GM12878 (cell line): ENCODE measurements at regions of chr18 and their contacts with region 1.

Region 1: DNA sequence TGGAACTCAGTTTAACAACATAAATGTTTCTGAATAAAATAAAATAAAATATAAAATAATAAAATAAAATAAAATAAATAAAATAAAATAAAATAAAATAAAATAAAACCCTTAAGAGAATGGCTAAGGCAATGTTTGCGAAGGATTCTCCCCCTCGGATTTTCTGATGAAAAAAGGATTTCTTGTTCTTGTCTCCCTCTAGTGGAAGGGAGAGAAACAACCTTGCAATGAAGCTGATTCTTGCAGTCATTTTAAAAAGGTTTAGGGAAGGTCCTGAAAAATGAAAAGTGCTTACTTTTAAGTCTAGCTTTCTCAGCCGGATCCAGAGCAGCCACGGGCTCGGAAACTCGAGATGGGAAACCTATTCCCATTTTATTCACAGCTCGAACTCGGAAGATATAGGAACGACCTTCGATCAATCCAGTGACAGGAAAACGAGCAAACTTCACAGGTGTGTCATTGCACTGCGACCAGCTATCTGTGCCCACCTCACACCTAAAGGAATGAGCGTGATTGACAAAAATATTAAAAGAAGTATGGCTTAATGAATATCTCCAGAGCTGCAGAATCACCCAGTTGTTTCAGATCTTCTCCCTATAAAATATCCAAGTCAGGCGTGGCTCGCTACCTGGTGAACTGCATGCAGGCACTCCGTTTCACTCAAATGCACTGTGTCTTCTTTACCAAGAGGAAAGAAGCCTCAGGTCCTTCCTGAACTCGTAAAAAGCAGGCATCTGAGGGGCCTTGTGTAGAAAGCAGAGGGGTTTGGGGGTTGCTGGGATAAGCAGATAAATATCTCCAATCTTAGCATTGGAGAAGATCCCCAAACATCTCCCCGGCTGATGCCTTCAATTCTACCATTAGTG is 68.1 kb downstream of the MYOM1 start:
- DNase-seq: no peak
- ATAC-seq: no peak
- H3K4me3 ChIP-seq: no peak overlapping the region
- H3K27ac ChIP-seq: no peak overlapping the region
- H3K4me1 ChIP-seq: peaks cover 12% of the 10 kb centered on the region
- H3K27me3 ChIP-seq: no peaks in the 10 kb centered on the region
- CTCF ChIP-seq: peak; percentile 56 to 72 (median 69); a peak in 5 of 6 replicates
- EP300 ChIP-seq: no peak
- POLR2A ChIP-seq: no peak
- RAD21 ChIP-seq: peak; percentile 78

Region 2: DNA sequence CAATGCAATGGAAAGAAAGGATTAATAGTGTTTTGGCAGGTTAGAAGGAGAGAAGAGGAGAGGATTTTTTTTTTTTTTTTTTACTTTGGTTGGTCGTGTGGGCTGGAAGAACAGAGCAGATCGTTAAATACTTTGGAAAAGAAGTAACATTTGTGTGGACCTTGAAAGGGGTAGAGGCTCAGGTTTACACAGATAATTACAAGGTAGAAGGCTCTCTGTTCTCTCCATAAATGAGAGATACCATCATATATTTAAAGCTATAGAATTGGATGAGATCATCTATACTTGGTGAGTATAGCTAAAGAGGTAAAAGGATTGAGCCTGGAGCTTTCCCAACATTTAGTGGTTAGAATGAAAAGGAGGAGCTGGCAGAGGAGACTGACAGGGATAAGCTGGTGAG is 447.1 kb before region 1 on chr18:
- CTCF ChIA-PET with region 1: no interaction called
- POLR2A ChIA-PET with region 1: no interaction called
- RAD21 ChIA-PET with region 1: no interaction called
- SMC1A ChIA-PET with region 1: no interaction called
- in situ Hi-C with region 1: no loop called
- intact Hi-C with region 1: no loop called
- DNase-seq: no peak
- ATAC-seq: no peak
- H3K4me3 ChIP-seq: no peak overlapping the region
- H3K27ac ChIP-seq: no peak overlapping the region
- H3K4me1 ChIP-seq: no peaks in the 10 kb centered on the region
- H3K27me3 ChIP-seq: no peaks in the 10 kb centered on the region
- CTCF ChIP-seq: no peak
- EP300 ChIP-seq: no peak
- POLR2A ChIP-seq: no peak
- RAD21 ChIP-seq: no peak

Region 3: GRCh38 chr18:2932247-2933181 is 219.1 kb before region 1 on chr18:
- CTCF ChIA-PET with region 1: interaction called, 20 read pairs
- POLR2A ChIA-PET with region 1: interaction called, 4 read pairs
- RAD21 ChIA-PET with region 1: interaction called, 16 read pairs
- SMC1A ChIA-PET with region 1: interaction called, 14 read pairs
- in situ Hi-C with region 1: no loop called
- intact Hi-C with region 1: loop called (anchors 2 kb)
- DNase-seq: peak; percentile 23
- ATAC-seq: peak; percentile 76
- H3K4me3 ChIP-seq: no peak overlapping the region
- H3K27ac ChIP-seq: no peak overlapping the region
- H3K4me1 ChIP-seq: no peaks in the 10 kb centered on the region
- H3K27me3 ChIP-seq: no peaks in the 10 kb centered on the region
- CTCF ChIP-seq: peak; percentile 40 to 71 (median 59); a peak in 5 of 6 replicates
- EP300 ChIP-seq: no peak
- POLR2A ChIP-seq: no peak
- RAD21 ChIP-seq: peak; percentile 94

Region 4: DNA sequence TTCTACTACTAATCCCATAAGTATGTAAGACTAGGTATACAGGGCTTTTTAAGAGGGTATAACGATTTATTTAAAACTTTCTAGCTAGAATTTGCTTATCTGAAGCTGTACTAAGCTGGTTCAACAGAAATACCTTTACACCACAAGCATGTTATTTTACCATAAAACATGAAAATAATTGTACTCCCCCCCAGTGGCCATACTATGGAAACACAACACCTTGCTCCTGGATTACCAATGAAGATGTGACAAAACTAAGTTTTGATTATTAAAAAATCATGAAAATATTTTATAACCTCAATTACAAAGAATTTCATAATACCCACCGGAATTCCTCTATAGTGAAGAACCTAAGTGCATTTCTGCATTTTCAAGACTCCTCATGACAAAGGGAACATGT is 166.0 kb before region 1 on chr18:
- CTCF ChIA-PET with region 1: interaction called, 19 read pairs
- POLR2A ChIA-PET with region 1: interaction called, 4 read pairs
- RAD21 ChIA-PET with region 1: interaction called, 11 read pairs
- SMC1A ChIA-PET with region 1: interaction called, 18 read pairs
- in situ Hi-C with region 1: no loop called
- intact Hi-C with region 1: loop called (anchors 5 kb)
- DNase-seq: no peak
- ATAC-seq: peak; percentile 67
- H3K4me3 ChIP-seq: no peak overlapping the region
- H3K27ac ChIP-seq: no peak overlapping the region
- H3K4me1 ChIP-seq: peaks cover 21% of the 10 kb centered on the region
- H3K27me3 ChIP-seq: no peaks in the 10 kb centered on the region
- CTCF ChIP-seq: peak; percentile 56 to 71 (median 62)
- EP300 ChIP-seq: no peak
- POLR2A ChIP-seq: no peak
- RAD21 ChIP-seq: peak; percentile 81

Region 5: DNA sequence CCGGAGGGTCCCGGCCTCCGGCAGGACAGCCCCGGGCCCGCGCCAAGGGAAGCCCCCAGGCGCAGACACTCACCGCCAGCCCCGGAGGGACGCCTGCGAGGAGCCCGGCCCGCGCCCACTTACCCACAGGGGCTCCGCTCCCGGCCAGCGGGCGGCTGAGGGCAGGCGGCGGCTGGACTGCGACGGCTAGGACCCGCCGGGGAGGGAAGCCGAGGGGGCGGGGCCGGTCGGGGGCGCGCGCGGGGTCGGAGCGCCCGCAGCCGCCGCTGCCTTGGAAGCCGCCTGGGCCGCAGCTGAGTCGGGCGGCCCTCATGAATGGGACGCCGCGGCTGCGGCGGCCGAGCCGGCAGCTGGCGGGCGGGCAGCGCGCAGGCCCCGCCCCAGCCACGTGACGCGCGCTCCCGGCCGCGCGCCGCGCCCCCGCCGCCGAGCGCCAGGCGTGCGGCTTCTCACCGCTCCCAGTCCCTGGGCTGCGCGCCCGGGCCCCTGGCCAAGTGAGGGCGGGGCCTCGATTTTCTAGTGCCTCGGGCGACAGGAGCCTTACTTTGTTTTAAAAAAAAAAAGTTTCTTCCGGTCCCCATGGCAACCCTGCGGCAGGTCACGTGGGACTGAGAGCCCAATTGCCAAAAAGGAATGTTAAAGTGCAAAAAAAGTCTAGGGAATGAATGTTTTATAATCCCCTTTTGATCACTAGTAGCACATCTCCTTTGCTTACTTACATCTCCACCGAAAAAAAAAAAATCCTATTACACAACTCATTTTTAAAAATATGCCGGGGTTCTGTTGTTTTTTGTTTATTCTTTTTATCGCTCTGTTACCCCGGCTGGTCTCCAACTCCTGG is 138.4 kb before region 1 on chr18 and contains the start of gene LPIN2:
- CTCF ChIA-PET with region 1: interaction called, 4 read pairs
- POLR2A ChIA-PET with region 1: no interaction called
- RAD21 ChIA-PET with region 1: no interaction called
- SMC1A ChIA-PET with region 1: interaction called, 6 read pairs
- in situ Hi-C with region 1: no loop called
- intact Hi-C with region 1: loop called (anchors 5 kb)
- DNase-seq: peak; percentile 71
- ATAC-seq: peak; percentile 88
- H3K4me3 ChIP-seq: peak within 1 kb of the TSS; percentile 74
- H3K27ac ChIP-seq: peak within 1 kb of the TSS; percentile 71
- H3K4me1 ChIP-seq: peaks cover 14% of the 10 kb centered on the region
- H3K27me3 ChIP-seq: no peaks in the 10 kb centered on the region
- CTCF ChIP-seq: no peak
- EP300 ChIP-seq: peak in 1 of 2 experiments; percentile 44; a peak in 1 of 4 replicates
- POLR2A ChIP-seq: peak; percentile 61; the same call in 1 of the 2 replicates
- RAD21 ChIP-seq: no peak
- polyA plus RNA-seq, gene LPIN2: 4.1 to 4.5 TPM

Region 6: DNA sequence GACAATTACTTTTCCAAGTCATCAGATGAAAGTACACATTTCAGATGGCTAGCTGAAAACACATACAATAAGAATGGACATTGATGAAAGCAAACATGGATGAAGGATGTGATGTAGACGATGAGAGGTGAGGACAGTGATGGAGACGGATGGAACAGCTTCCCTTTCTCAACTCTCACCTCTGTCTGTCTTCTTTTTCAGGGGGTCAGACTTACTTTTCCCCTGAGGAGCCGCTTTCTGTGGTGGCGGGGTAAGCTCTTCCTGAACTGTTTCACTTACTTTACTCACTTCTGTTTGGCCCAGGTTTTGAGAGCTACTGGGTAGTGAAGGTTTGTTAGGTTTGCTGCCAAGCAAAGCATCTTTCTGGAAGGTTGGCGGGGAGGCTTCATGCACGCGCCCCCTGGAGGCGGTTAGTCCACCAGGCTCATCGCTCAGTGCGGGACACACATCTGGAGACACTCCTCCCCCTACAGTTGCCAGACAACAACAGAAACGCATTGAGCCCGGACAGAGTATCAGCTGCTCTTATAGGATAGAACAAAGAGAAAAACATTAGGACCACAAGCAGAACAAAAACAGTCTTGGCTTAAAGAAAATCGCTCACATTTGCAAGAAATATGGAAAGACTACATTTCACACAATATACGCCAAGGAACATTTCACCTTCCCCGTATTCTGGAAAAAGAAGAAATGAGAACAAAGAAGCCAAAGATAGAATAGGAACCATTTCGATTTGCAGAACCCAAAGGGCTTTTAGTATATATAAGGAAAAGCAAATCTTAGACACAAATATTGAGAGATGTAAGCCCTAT is 22.4 kb before region 1 on chr18:
- CTCF ChIA-PET with region 1: interaction called, 31 read pairs
- POLR2A ChIA-PET with region 1: interaction called, 8 read pairs
- RAD21 ChIA-PET with region 1: no interaction called
- SMC1A ChIA-PET with region 1: interaction called, 17 read pairs
- in situ Hi-C with region 1: no loop called
- intact Hi-C with region 1: no loop called
- DNase-seq: no peak
- ATAC-seq: peak; percentile 100
- H3K4me3 ChIP-seq: no peak overlapping the region
- H3K27ac ChIP-seq: no peak overlapping the region
- H3K4me1 ChIP-seq: no peaks in the 10 kb centered on the region
- H3K27me3 ChIP-seq: no peaks in the 10 kb centered on the region
- CTCF ChIP-seq: peak; percentile 92 to 95 (median 95)
- EP300 ChIP-seq: no peak
- POLR2A ChIP-seq: no peak
- RAD21 ChIP-seq: peak; percentile 48

Region 7: DNA sequence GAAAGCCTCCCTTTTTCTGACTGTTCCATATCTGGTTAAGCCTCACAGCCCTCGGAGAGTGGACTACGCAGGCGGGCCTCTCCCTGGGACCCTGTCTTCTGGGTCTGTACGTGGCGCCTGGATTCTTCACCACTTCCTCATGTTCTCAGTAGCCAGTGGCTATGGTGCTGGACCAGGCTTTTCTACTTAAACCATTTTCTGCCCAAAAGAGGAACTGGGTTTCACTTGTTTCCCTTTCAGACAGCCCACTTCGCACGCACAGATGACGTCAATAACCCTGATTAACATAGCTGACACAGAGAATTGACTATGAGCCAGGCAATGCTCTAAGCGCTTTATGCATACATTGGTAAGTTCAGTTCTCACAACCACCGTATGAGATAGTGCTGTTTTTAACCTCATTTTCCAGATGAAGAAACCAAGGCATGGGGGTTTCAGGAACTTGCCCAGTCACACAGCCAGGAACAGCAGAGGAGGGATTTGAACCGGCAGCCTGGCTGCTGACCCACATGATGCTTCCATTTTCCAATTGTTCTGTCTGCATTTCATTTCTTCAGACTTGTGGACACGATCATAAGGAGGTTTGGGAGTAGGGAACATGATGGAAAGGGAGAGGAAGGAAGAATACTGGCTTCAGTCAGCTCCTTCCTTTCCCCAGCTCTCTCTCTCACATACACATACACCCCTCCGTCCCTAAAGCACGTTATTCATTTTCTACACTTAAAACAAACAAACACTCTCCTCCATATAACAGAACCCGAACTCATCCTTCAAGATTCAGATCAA is 26.5 kb after region 1 on chr18:
- CTCF ChIA-PET with region 1: interaction called, 34 read pairs
- POLR2A ChIA-PET with region 1: interaction called, 12 read pairs
- RAD21 ChIA-PET with region 1: interaction called, 15 read pairs
- SMC1A ChIA-PET with region 1: interaction called, 40 read pairs
- in situ Hi-C with region 1: no loop called
- intact Hi-C with region 1: loop called (anchors 1 kb)
- DNase-seq: peak; percentile 98
- ATAC-seq: peak; percentile 91
- H3K4me3 ChIP-seq: 0 out of 2 replicates have a peak overlapping the region, but pooled peaks have one; percentile 6
- H3K27ac ChIP-seq: peak overlapping the region; percentile 97
- H3K4me1 ChIP-seq: peaks cover 50% of the 10 kb centered on the region
- H3K27me3 ChIP-seq: no peaks in the 10 kb centered on the region
- CTCF ChIP-seq: no peak
- EP300 ChIP-seq: peak; percentile 100
- POLR2A ChIP-seq: peak; percentile 78
- RAD21 ChIP-seq: no peak

Region 8: GRCh38 chr18:3209859-3210569 is 58.4 kb after region 1 on chr18:
- CTCF ChIA-PET with region 1: interaction called, 5 read pairs
- POLR2A ChIA-PET with region 1: no interaction called
- RAD21 ChIA-PET with region 1: interaction called, 6 read pairs
- SMC1A ChIA-PET with region 1: interaction called, 4 read pairs
- in situ Hi-C with region 1: no loop called
- intact Hi-C with region 1: loop called (anchors 5 kb)
- DNase-seq: peak; percentile 20
- ATAC-seq: peak; percentile 97
- H3K4me3 ChIP-seq: no peak overlapping the region
- H3K27ac ChIP-seq: no peak overlapping the region
- H3K4me1 ChIP-seq: no peaks in the 10 kb centered on the region
- H3K27me3 ChIP-seq: no peaks in the 10 kb centered on the region
- CTCF ChIP-seq: no peak
- EP300 ChIP-seq: peak in 1 of 2 experiments; percentile 59; a peak in 1 of 4 replicates
- POLR2A ChIP-seq: no peak
- RAD21 ChIP-seq: no peak